ENCODE measurements at regions of chr19 and their contacts with region 1.

Region 1: GRCh38 chr19:53076977-53077376 is 26.2 kb downstream of the ZNF160 start:
- DNase-seq: peak; percentile 79 to 89
- H3K4me3 ChIP-seq: no peak overlapping the region
- H3K27ac ChIP-seq: no peak overlapping the region
- H3K4me1 ChIP-seq: no peaks in the 10 kb centered on the region
- H3K27me3 ChIP-seq: no peaks in the 10 kb centered on the region
- CTCF ChIP-seq: peak; percentile 84 to 96 (median 84)
- EP300 ChIP-seq: no peak
- POLR2A ChIP-seq: no peak
- RAD21 ChIP-seq: peak; percentile 88

Region 2: DNA sequence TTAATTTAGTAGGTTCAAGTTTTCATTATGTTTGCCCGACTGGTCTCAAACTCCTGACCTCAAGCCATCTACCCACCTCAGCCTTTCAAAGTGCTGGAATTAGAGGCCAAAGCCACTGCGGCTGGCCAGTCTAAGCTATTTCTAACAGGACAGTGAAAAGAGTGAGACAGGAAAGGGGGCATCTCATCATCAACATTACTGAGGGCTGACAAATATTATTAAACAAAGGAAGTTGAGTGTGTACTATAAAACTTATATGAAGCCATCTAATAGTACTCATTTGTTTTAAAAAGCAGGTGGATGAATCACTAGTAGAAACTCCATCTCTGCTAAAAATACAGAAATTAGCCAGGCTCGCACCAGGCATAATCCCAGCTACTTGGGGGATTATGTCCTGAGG is 366.4 kb before region 1 on chr19:
- CTCF ChIA-PET with region 1: no interaction called
- POLR2A ChIA-PET with region 1: no interaction called
- DNase-seq: no peak
- H3K4me3 ChIP-seq: no peak overlapping the region
- H3K27ac ChIP-seq: no peak overlapping the region
- H3K4me1 ChIP-seq: peaks cover 0 to 2% (median 0%) of the 10 kb centered on the region in 4 experiments; a peak in 2 of 7 replicates
- H3K27me3 ChIP-seq: peaks cover 0 to 8% (median 2%) of the 10 kb centered on the region in 4 experiments; a peak in 4 of 7 replicates
- CTCF ChIP-seq: no peak
- EP300 ChIP-seq: no peak
- POLR2A ChIP-seq: no peak
- RAD21 ChIP-seq: no peak

Region 3: GRCh38 chr19:53002479-53002878 is 74.5 kb before region 1 on chr19:
- CTCF ChIA-PET with region 1: no interaction called
- POLR2A ChIA-PET with region 1: no interaction called
- DNase-seq: no peak
- H3K4me3 ChIP-seq: no peak overlapping the region
- H3K27ac ChIP-seq: no peak overlapping the region
- H3K4me1 ChIP-seq: peaks cover 0 to 4% (median 1%) of the 10 kb centered on the region in 4 experiments; a peak in 2 of 7 replicates
- H3K27me3 ChIP-seq: peaks cover 0 to 5% (median under 1%) of the 10 kb centered on the region in 4 experiments; a peak in 3 of 7 replicates
- CTCF ChIP-seq: no peak
- EP300 ChIP-seq: no peak
- POLR2A ChIP-seq: no peak
- RAD21 ChIP-seq: no peak

Region 4: DNA sequence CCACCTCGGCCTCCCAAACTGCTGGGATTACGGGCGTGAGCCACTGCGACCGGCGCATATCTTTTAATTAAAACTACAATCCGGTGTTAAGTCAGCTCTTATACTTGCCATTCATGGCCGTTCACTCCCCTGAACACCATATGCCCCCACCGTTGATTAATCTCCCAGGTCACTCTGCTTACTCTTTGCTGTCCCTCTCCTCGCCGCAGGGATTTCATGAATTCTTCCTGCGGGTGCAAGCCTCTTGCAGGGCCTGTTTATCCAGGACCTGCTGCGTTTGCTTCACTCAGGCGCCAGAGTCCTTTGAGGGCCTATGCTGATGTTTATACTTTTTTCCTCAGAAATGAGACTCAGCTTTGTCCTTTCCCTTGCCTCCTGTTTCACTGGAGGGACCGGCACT is 31.4 kb before region 1 on chr19:
- CTCF ChIA-PET with region 1: interaction called, 10 read pairs
- POLR2A ChIA-PET with region 1: no interaction called
- DNase-seq: no peak
- H3K4me3 ChIP-seq: no peak overlapping the region
- H3K27ac ChIP-seq: no peak overlapping the region
- H3K4me1 ChIP-seq: no peaks in the 10 kb centered on the region
- H3K27me3 ChIP-seq: no peaks in the 10 kb centered on the region
- CTCF ChIP-seq: no peak
- EP300 ChIP-seq: no peak
- POLR2A ChIP-seq: no peak
- RAD21 ChIP-seq: no peak

Region 5: GRCh38 chr19:53057904-53058580 is 18.9 kb before region 1 on chr19:
- CTCF ChIA-PET with region 1: interaction called, 11 read pairs
- POLR2A ChIA-PET with region 1: interaction called, 3 read pairs
- DNase-seq: peak; percentile 57 to 90
- H3K4me3 ChIP-seq: peak overlapping the region; percentile 39 to 61 (median 54)
- H3K27ac ChIP-seq: no peak overlapping the region
- H3K4me1 ChIP-seq: 0 out of 7 replicates have a peak, but pooled peaks cover 0 to 4% (median 0%) of the 10 kb centered on the region in 4 experiments
- H3K27me3 ChIP-seq: peaks cover 5 to 16% (median 14%) of the 10 kb centered on the region in 4 experiments; a peak in 6 of 7 replicates
- CTCF ChIP-seq: no peak
- EP300 ChIP-seq: no peak
- POLR2A ChIP-seq: 0 out of 3 replicates have a peak, but pooled peaks of 1 of the 2 experiments have one; percentile 42
- RAD21 ChIP-seq: no peak

Region 6: DNA sequence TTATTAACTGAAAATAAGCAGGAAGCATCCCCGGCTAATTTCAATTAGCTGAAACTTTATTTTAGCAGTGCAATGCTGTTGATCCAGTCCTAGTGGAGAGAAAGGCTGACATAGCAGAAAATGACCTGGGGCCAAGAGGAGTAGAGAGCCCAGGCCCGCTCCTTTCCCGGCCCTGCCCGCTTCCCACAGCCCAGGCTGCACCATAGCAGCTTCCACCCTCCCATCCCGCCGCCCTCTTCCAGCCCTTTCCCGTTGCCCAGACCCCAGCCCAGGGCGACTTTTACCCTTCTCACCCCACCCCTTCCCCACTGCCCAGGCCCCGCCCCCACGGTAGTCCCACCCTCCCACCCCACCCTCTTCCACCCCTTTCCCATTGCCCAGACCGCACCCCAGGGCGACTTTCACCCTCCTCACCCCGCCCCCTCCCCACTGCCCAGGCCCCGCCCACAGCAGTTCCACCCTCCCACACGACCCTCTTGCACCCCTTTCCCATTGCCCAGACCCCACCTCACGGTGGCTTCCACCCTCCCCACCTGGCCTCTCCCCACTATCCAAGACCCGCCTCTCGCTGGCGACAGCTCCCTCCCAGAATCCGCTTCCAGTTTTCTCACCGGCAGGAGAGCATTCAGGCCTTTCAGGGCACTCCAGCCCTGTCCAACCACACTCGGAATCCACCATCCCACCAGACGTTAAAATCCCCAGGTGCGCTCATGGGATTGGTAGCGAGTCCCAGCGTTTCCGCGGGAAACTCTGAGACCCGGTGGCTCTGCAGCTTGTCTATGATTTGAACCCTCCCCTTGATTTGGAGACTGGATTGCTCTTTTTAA is 18.0 kb after region 1 on chr19:
- CTCF ChIA-PET with region 1: interaction called, 13 read pairs
- POLR2A ChIA-PET with region 1: interaction called, 3 read pairs
- DNase-seq: peak; percentile 61 to 80
- H3K4me3 ChIP-seq: peak overlapping the region; percentile 24 to 50 (median 34); a peak in 5 of 8 replicates
- H3K27ac ChIP-seq: no peak overlapping the region
- H3K4me1 ChIP-seq: peaks cover 0 to 7% (median 2%) of the 10 kb centered on the region in 4 experiments; a peak in 3 of 7 replicates
- H3K27me3 ChIP-seq: no peaks in the 10 kb centered on the region
- CTCF ChIP-seq: no peak
- EP300 ChIP-seq: no peak
- POLR2A ChIP-seq: 0 out of 3 replicates have a peak, but pooled peaks of 1 of the 2 experiments have one; percentile 28
- RAD21 ChIP-seq: no peak

Region 7: DNA sequence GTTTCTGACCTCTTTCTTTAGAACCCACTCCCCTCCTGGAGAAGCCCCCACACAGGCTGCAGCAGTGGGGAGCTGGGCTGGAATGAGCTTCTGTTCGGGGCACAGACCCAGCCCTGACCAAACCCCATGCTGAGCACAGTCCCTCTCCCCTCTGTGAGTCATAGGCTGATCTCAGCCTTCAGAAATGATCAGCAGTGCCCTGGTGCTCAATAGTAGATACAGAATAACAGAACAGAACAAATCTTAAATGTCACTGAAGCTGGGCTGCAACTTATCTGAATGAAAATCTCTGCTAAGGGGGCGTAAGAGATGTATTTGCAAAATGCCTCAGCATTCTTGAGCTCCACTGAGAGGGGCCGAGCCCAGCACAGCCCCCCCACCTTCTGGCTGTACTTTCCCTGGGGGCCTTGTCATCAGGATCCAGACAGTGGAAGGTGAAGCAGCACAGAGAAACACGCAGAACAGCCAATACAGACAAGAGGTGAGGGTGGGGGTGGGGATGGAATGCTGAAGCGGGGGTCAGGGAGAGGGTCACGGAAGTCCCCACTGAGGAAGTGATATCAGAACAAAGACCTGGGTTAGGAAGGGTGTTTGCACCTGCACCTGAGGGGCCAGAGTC is 106.3 kb after region 1 on chr19:
- CTCF ChIA-PET with region 1: interaction called, 15 read pairs
- POLR2A ChIA-PET with region 1: no interaction called
- DNase-seq: no peak
- H3K4me3 ChIP-seq: no peak overlapping the region
- H3K27ac ChIP-seq: no peak overlapping the region
- H3K4me1 ChIP-seq: no peaks in the 10 kb centered on the region; a peak in 1 of 7 replicates
- H3K27me3 ChIP-seq: no peaks in the 10 kb centered on the region
- CTCF ChIP-seq: no peak
- EP300 ChIP-seq: no peak
- POLR2A ChIP-seq: no peak
- RAD21 ChIP-seq: no peak